Panc1 (cell line): ENCODE measurements at regions of chr2 and their contacts with region 1.

Region 1: GRCh38 chr2:15636972-15637785 is 45.5 kb downstream of the DDX1 start:
- DNase-seq: peak; percentile 27
- ATAC-seq: peak; percentile 88
- H3K4me3 ChIP-seq: no peak overlapping the region
- H3K27ac ChIP-seq: no peak overlapping the region
- H3K4me1 ChIP-seq: no peaks in the 10 kb centered on the region
- H3K27me3 ChIP-seq: no peaks in the 10 kb centered on the region
- CTCF ChIP-seq: peak; percentile 89

Region 2: GRCh38 chr2:15226661-15227060 is 410.5 kb before region 1 on chr2:
- CTCF ChIA-PET with region 1: no interaction called
- POLR2A ChIA-PET with region 1: no interaction called
- in situ Hi-C with region 1: no loop called
- intact Hi-C with region 1: no loop called
- DNase-seq: no peak
- ATAC-seq: no peak
- H3K4me3 ChIP-seq: no peak overlapping the region
- H3K27ac ChIP-seq: no peak overlapping the region
- H3K4me1 ChIP-seq: no peaks in the 10 kb centered on the region
- H3K27me3 ChIP-seq: no peaks in the 10 kb centered on the region
- CTCF ChIP-seq: no peak

Region 3: DNA sequence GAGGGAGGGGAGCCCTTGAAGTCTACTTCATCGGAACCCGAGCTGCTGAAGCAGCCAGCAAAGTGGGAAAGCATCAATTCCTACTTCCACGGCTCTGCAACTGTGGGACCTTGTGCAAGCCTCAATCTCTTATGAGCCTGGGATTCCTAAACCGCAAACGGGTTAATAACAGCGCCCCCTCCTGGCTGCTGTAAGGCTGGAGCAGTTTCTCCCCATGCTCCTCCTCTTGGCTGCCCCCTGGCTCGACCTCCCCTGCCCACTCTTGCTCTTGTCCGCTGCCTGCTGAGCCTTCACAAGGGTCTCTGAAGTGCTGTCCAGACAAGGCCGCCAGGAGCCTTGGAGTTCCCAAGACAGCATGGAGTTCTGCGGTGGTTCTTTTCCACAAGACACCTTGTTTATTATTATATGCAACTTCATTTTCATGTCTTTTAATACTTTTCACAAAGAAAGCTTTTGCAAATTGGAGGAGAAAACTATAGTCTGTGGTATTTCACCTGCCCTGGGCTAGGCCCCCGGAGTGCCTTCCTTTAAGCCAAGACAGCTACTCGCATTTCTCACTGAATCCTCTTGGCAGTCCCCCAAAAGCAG is 111.7 kb after region 1 on chr2:
- CTCF ChIA-PET with region 1: no interaction called
- POLR2A ChIA-PET with region 1: no interaction called
- in situ Hi-C with region 1: no loop called
- intact Hi-C with region 1: loop called (anchors 5 kb)
- DNase-seq: no peak
- ATAC-seq: no peak; the same call in 1 of the 2 replicates
- H3K4me3 ChIP-seq: no peak overlapping the region
- H3K27ac ChIP-seq: no peak overlapping the region
- H3K4me1 ChIP-seq: no peaks in the 10 kb centered on the region; the same call in 1 of the 2 replicates
- H3K27me3 ChIP-seq: no peaks in the 10 kb centered on the region
- CTCF ChIP-seq: peak; percentile 70

Region 4: DNA sequence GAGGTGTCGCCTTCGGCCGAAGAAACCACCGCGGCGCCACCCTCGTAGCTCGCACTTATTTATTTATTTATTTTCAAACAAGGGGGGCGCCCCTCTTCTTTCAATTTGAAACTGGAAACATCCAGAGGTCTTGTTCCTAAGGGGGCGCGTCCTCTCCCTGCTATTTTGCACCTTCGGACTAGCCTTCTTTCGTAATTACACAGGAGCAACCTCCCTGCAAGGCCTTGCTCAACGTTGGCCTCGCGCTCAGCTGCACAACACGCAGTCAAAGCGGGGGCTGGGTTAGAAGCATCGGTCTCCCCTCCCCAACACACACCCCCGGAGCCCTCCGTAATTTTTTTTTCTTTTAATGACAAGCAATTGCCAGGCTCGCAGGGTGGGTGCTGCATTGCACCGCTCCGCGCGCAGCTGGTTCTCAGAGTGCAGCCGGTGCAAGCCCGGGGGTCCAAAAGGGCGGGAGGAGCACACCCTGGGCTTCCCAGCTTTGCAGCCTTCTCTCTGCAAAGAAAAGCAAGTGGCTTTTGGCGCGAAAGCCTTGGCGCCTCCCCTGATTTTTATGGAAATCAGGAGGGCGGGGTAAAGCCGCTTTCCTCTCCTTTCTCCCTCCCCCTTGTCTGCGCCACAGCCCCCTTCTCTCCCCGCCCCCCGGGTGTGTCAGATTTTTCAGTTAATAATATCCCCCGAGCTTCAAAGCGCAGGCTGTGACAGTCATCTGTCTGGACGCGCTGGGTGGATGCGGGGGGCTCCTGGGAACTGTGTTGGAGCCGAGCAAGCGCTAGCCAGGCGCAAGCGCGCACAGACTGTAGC is 302.9 kb after region 1 on chr2 and contains the start of gene MYCN:
- CTCF ChIA-PET with region 1: no interaction called
- POLR2A ChIA-PET with region 1: no interaction called
- in situ Hi-C with region 1: no loop called
- intact Hi-C with region 1: loop called (anchors 2 kb)
- DNase-seq: no peak
- ATAC-seq: peak; percentile 55
- H3K4me3 ChIP-seq: peak within 1 kb of the TSS; percentile 19 to 46
- H3K27ac ChIP-seq: no peak within 1 kb of the TSS
- H3K4me1 ChIP-seq: peaks cover 12% of the 10 kb centered on the region
- H3K27me3 ChIP-seq: peaks cover 26% of the 10 kb centered on the region
- CTCF ChIP-seq: peak; percentile 88
- total RNA-seq, gene MYCN: not detected

Region 5: DNA sequence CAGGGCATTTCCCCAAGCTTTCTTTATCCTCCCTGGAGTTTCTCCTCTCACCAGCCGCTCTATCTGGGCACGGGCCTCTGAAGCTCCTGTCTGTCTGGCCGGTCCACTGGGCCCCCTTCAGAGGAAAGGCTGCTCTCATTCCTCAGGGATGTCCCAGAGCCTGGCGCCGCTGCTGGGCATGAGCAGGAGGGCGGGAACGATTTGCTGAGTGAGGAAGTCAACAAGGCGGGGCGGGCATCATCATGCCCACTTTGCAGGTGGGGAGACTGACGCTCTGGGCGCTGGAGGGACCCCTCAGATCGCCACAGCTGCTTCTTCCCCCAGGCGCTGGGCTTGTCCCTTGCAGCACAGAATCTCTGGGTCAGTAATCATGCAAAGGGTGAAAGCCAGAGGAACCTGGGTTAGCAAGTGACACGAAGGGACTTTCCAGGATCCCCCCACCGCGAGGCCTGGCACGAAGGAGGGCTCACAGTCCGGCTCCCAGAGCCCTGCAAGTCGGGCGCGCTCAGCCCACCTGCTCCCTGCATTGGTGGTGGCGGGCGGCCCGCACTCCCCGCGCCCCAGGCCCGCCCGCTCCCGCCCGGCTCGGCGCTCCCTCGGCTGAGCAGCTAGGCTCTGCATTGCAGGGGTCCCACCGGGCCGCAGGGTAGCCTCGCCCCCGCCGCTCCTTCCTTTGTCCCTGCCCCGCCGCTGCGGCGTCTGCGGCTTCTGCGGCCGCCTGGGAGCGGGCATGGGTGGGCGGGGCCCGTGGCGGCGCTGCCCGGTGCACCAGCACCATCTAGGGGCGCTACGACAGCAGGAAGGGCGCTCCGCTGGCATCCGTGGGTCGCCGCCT is 870.7 kb after region 1 on chr2:
- CTCF ChIA-PET with region 1: no interaction called
- POLR2A ChIA-PET with region 1: no interaction called
- in situ Hi-C with region 1: no loop called
- intact Hi-C with region 1: loop called (anchors 2 kb)
- DNase-seq: no peak
- ATAC-seq: peak; percentile 97
- H3K4me3 ChIP-seq: peak overlapping the region; percentile 21 to 25
- H3K27ac ChIP-seq: no peak overlapping the region
- H3K4me1 ChIP-seq: no peaks in the 10 kb centered on the region; the same call in 1 of the 2 replicates
- H3K27me3 ChIP-seq: peaks cover 8% of the 10 kb centered on the region
- CTCF ChIP-seq: peak; percentile 88

Region 6: DNA sequence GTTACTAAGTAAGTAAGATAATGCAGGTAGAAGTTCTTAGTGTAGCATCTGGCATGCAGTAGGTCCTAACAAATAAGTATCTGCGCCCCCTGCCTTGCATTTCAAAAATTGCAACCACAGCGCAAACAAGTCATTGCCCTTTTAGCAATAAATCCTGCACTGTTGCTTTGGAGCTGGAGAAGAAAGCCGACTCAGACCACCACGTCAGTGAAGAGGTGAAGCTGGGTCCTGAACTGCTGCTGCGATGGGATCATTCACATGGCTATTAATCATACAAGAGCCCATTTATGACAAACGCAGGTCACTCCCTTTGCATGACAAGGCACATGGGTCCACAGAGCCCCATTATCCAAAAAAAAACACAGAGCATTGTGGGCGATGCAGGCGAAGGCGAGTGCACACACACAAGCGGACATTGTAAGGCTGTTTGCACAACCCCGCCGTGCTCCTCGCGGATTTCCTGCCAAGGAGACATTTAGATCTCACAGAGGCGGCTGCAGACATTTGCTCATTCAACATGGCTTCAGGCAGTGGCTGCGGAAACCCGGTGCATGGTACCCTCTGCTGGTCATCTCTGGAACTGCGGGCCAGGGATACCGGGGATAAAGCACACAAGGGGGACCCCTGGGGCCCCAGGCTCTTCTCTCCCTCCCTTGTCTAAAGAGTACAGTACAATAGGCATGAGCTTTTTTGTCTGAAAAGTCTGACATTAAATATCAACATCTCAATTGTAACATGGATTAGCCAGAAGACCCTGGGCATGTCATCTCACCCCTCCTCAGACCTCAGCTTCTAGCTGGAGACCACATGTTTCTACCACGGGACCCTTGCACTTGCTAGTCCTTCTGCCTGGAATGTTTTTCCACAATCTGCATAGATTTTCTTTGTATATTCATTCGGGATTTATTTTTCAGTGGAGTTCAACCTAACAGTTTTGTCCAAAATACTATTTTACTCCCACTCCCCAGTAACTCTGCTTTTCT is 971.8 kb after region 1 on chr2:
- CTCF ChIA-PET with region 1: no interaction called
- POLR2A ChIA-PET with region 1: no interaction called
- in situ Hi-C with region 1: no loop called
- intact Hi-C with region 1: loop called (anchors 5 kb)
- DNase-seq: peak; percentile 50
- ATAC-seq: peak; percentile 91
- H3K4me3 ChIP-seq: peak overlapping the region; percentile 13 to 34; a peak in 3 of 4 replicates
- H3K27ac ChIP-seq: no peak overlapping the region
- H3K4me1 ChIP-seq: no peaks in the 10 kb centered on the region
- H3K27me3 ChIP-seq: peaks cover 10% of the 10 kb centered on the region
- CTCF ChIP-seq: peak; percentile 95